Cardiac septum (tissue), 1 donor: ENCODE measurements at regions of chr2 and their contacts with region 1.

Region 1: DNA sequence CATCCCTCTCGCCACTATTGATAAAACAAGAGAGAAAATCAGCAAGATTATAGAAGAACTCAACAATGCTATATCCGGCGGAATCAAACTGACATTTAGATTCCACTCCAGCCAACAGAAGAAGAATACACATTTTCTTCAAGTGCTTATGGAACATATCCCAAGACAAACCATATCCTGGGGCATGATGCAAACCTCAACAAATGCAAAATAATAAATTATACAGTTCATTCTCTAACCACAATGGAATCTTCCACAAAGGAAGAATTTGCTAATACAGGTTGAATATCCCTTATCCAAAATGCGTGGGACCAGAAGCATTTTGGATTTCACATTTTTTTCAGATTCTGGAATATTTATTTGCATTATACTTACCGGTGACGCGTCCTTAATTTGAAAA is 51.4 kb upstream of the YPEL5 start:
- DNase-seq: no peak

Region 2: GRCh38 chr2:30115141-30115980 is 20.0 kb after region 1 on chr2:
- intact Hi-C with region 1: loop called (anchors 1 kb)
- DNase-seq: peak; percentile 88

Region 3: DNA sequence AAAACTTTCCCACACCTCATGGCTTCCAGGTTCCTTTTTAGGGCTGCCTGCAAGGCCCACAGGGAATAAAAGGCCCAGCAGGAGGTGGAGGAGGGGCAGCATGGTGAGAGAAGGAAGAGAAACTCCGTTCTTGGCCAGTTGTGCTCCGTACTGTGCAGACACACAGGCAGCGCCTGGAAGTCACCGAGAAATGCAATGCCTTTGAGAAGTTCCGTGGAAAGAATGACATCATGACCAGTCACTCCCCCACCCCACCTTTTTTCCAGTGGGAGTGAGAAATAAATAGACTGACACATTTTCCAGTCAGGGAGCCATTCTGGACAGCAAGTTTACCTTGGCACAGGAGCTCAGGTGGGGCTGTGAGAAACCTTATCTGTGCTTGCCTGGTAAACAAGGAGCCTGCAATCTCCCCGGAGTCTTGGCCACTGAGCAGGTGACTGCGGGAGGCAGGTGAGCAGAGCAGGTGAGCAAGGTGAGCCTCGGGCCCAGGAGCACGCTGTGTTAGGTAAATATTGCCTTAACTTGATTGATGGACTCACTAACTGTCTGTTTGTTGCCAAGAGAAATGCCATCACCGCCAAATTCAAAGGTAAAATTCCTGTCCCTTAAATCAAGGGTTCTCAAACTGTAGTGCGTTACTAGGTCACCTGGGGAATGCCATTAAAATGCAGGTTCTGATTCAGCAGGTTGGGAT is 122.4 kb after region 1 on chr2:
- intact Hi-C with region 1: no loop called
- DNase-seq: peak; percentile 71